HCT116 (cell line): ENCODE measurements at regions of chr19 and their contacts with region 1.

Region 1: GRCh38 chr19:45079063-45079910 is at the start of gene GEMIN7:
- DNase-seq: peak; percentile 44
- ATAC-seq: peak; percentile 56
- H3K4me3 ChIP-seq: peak within 1 kb of the TSS; percentile 99
- H3K27ac ChIP-seq: peak within 1 kb of the TSS; percentile 73
- H3K4me1 ChIP-seq: peaks cover 31 to 45% of the 10 kb centered on the region in 2 experiments
- H3K27me3 ChIP-seq: no peaks in the 10 kb centered on the region
- CTCF ChIP-seq: no peak
- POLR2A ChIP-seq: no peak
- RAD21 ChIP-seq: no peak
- total RNA-seq, gene GEMIN7: 35.4 TPM

Region 2: GRCh38 chr19:45092747-45093678 is 13.7 kb after region 1 on chr19 and contains the start of gene PPP1R37:
- CTCF ChIA-PET with region 1: interaction called, 4 read pairs
- POLR2A ChIA-PET with region 1: interaction called, 10 read pairs
- RAD21 ChIA-PET with region 1: no interaction called
- intact Hi-C with region 1: no loop called
- DNase-seq: peak; percentile 98
- ATAC-seq: peak; percentile 71
- H3K4me3 ChIP-seq: peak within 1 kb of the TSS; percentile 94 to 96
- H3K27ac ChIP-seq: peak within 1 kb of the TSS; percentile 84
- H3K4me1 ChIP-seq: peaks cover 13 to 57% of the 10 kb centered on the region in 2 experiments; a peak in 3 of 4 replicates
- H3K27me3 ChIP-seq: no peaks in the 10 kb centered on the region
- CTCF ChIP-seq: peak in 2 of 3 experiments; percentile 10 to 32; a peak in 1 of 6 replicates
- POLR2A ChIP-seq: peak; percentile 26
- RAD21 ChIP-seq: no peak
- total RNA-seq, gene PPP1R37: 32.7 TPM

Region 3: DNA sequence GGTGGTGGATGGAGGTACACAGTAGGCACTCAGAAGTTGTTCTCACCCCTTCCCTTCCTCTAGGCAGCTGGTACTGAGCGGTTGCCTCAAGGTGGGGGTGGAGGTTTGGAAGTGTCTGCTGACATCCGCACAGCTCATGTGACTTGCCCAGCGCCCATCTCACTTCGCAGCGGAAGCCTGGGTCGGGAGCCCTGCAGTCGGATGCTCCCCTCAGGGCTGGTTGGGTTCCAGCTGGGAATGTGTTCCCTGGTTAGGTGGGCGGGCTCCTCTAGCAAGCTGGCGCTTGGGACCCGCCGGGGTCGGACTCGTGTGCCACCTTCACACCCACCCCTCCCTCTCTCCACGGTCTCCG is 23.8 kb after region 1 on chr19:
- CTCF ChIA-PET with region 1: no interaction called
- POLR2A ChIA-PET with region 1: no interaction called
- RAD21 ChIA-PET with region 1: no interaction called
- intact Hi-C with region 1: no loop called
- DNase-seq: no peak
- ATAC-seq: no peak
- H3K4me3 ChIP-seq: no peak overlapping the region
- H3K27ac ChIP-seq: no peak overlapping the region
- H3K4me1 ChIP-seq: peaks cover 3 to 6% of the 10 kb centered on the region in 2 experiments; a peak in 3 of 4 replicates
- H3K27me3 ChIP-seq: no peaks in the 10 kb centered on the region
- CTCF ChIP-seq: no peak
- POLR2A ChIP-seq: no peak
- RAD21 ChIP-seq: no peak